Spleen (tissue), 13 donors: ENCODE measurements at regions of chr1 and their contacts with region 1.

Region 1: DNA sequence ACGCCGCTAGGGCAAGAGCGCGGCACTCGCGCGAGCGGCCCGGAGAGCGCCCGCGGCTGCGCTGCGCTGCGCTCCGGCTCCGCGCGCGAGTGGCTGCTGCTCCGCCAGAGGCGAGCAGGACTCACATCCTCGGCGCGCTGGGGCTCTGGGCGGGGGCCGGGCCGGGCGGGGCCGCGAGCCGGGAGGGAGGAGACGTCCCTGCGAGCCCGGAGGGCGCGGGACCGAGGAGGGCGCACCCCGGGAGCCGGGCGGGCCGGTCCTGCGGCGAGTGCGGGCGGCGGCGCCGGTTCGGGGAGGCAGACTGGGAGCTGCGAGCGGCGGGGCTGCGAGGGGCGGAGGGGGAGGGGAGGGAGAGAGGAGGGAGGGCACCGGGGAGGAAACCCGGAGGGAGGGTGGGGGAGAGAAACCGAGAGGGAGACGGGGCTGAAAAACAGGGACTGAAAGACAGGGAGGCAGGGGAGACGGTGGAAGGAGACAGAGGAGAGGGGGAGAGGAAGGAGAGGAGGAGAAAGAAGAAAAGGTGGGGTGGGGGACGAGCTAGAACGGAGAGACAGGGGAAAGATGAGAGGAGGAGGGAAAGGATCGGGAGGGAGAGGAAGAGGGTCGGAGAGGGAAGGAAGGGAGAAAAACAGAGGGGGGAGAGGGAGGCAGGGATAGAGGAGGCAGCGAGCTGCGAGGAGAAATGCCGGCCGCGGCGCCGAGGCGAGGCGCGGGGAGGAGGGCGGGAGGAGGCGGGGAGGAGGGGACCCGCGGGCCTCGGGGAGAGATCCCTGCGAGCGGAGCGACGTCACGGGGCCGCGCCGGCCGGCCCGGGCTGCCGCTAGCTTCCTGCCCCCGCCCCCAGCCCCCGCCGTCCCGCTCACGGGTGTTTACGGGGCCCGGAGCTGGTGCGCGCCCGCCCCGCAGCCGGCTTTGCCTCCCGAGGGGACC is at the start of gene CAMK2N1:
- DNase-seq: peak; percentile 87
- H3K4me3 ChIP-seq: peak within 1 kb of the TSS; percentile 41 to 77 (median 52)
- H3K27ac ChIP-seq: peak within 1 kb of the TSS in 7 of 8 donors; percentile 41 to 80 (median 75)
- H3K4me1 ChIP-seq: peaks cover 11 to 47% (median 36%) of the 10 kb centered on the region in 6 donors
- H3K27me3 ChIP-seq: peaks cover 7 to 92% (median 55%) of the 10 kb centered on the region in 7 donors
- CTCF ChIP-seq: no peak
- POLR2A ChIP-seq: no peak
- total RNA-seq, gene CAMK2N1: 6.7 to 17.2 (median 11.1) TPM

Region 2: DNA sequence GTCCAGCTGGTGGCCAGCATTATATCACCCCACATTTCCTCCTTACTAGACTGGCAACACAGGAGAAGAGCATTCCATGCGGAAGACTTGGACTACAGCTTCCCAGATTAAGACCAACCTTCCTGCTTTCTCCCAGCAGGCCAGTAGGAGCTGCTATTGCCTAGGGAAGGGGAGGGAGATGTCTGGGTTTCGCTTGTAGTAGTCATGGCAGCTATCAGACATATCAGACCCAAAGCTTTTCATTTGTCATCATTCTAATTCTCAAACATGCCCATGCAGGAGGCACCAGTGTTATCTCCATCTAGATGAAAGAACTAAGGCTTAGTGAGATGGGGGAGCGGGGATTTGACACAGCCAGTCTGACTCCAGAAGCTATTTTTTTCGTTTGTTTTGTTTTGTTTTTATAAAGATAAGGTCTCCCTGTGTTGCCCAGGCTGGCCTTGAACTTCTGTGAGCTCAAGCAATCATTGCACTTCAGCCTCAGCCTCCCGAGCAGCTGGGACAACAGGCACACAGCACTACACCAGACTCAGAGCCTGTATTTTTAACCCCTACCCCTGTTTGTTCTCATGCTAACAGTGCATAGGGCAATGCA is 510.9 kb before region 1 on chr1:
- intact Hi-C with region 1: no loop called
- DNase-seq: no peak
- H3K4me3 ChIP-seq: no peak overlapping the region
- H3K27ac ChIP-seq: no peak overlapping the region
- H3K4me1 ChIP-seq: peaks cover 0 to 7% (median 0%) of the 10 kb centered on the region in 6 donors
- H3K27me3 ChIP-seq: peaks cover 0 to 28% (median 0%) of the 10 kb centered on the region in 7 donors
- CTCF ChIP-seq: peak; percentile 37 to 76 (median 56)
- POLR2A ChIP-seq: no peak

Region 3: DNA sequence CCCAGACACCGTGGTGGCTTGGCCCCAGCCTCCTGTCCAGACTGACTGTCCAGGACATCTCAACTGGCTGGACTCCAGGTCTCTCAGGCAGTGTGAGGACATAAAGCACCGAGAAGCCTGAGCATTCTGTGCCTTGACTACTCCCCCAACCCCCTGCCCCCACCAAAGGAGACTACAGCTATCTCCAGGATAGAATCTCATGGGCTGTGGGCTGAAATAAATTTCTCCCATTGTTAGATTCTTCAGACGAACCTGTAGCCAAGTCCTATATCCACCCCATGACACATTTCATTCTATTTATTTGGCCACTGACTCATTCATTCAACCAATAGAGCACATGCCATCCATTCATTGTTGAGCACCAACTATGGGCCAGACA is 183.7 kb before region 1 on chr1:
- intact Hi-C with region 1: no loop called
- DNase-seq: no peak
- H3K4me3 ChIP-seq: no peak overlapping the region
- H3K27ac ChIP-seq: no peak overlapping the region
- H3K4me1 ChIP-seq: no peaks in the 10 kb centered on the region
- H3K27me3 ChIP-seq: peaks cover 0 to 25% (median 0%) of the 10 kb centered on the region in 7 donors
- CTCF ChIP-seq: no peak
- POLR2A ChIP-seq: no peak

Region 4: DNA sequence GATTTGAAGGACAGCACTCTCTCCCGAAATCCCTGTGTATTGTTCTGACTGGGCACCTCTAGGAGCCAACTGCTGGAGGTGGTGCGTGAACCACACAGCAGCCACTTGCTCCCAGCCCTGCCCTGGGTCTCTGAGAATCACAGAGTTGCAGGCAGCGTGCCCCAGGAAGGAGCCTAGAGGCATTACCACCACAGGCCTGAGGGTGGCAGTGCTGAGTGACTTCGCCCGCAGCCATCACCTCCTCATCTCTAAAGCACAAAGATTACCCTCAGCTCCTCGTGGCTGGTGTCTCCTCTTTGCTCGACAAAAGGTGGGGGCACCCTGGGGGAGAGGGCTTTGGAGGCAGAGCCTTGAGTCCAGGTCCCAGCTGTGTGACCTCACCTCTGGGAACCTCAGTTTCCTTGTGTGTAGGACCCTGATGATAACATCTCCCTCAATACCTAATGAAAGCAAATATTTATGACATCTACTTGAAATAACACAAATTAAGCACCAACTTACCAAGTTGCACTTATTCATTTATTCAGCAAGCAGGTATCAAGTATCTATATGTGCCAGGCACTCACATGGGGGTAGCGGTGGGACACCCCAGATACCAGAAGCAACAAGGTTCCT is 108.8 kb before region 1 on chr1:
- intact Hi-C with region 1: loop called (anchors 5 kb)
- DNase-seq: peak; percentile 79
- H3K4me3 ChIP-seq: no peak overlapping the region
- H3K27ac ChIP-seq: no peak overlapping the region
- H3K4me1 ChIP-seq: peaks cover 0 to 10% (median 2%) of the 10 kb centered on the region in 6 donors
- H3K27me3 ChIP-seq: peaks cover 0 to 66% (median 0%) of the 10 kb centered on the region in 7 donors
- CTCF ChIP-seq: peak; percentile 42 to 84 (median 73)
- POLR2A ChIP-seq: no peak

Region 5: DNA sequence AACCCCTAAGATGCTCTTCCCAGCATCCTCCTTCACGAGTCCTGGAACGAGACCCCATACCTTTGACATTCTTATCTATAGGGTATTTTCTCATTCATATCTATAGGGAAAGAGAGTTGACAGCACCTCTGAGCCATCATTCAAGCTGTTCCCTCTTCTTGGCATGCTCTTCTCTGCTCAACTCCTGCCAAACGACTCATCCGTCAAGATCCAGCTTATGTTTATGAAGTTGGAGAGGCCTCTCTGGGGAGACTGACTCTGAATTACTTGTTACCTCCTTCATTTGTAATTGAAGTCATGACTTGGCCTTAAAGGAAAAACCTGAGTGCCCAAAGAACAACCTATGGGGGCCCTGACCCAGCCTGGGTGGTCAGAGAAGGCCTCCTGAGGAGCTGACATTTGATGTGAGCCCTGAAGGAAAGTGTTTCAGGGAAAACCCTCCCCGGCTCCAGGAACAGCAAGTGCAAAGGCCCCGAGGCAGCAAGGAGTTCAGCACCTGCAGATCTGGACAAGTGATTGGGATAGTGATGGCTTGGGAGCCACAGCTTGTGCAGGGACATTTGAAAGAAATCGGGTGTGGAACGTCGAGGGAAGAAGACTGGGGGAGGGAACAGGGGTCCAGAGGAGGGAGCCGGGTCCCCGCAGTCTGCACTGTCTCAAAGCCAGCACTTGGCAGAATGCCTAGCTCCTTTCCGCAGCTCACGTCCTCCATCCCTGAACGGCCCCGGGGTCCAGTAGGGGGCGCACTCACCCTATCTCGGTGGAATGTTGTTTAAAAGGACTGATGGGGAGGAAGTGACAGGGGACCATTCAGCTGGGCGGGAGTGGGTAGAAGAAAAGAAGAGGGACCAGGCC is 89.1 kb after region 1 on chr1:
- intact Hi-C with region 1: no loop called
- DNase-seq: peak; percentile 92
- H3K4me3 ChIP-seq: no peak overlapping the region
- H3K27ac ChIP-seq: peak overlapping the region in 1 of 8 donors; percentile 17
- H3K4me1 ChIP-seq: peaks cover 0 to 11% (median 6%) of the 10 kb centered on the region in 6 donors
- H3K27me3 ChIP-seq: peaks cover 0 to 39% (median 0%) of the 10 kb centered on the region in 7 donors
- CTCF ChIP-seq: peak; percentile 52 to 91 (median 79)
- POLR2A ChIP-seq: no peak